Naive thymus-derived CD4-positive, alpha-beta T cell (primary cell): ENCODE measurements at regions of chr11 and their contacts with region 1.

Region 1: GRCh38 chr11:102666331-102666957 is 39.1 kb downstream of the MMP27 start:
- DNase-seq: peak in 7 of 9 donors; percentile 4 to 42 (median 23)
- ATAC-seq: peak; percentile 51
- H3K4me3 ChIP-seq: no peak overlapping the region
- H3K4me3 Mint-ChIP-seq: no peak overlapping the region
- H3K27ac ChIP-seq: no peak overlapping the region
- H3K27ac Mint-ChIP-seq: no peak overlapping the region
- H3K4me1 ChIP-seq: no peaks in the 10 kb centered on the region
- H3K4me1 Mint-ChIP-seq: no peaks in the 10 kb centered on the region
- H3K27me3 ChIP-seq: no peaks in the 10 kb centered on the region
- H3K27me3 Mint-ChIP-seq: peaks cover 0 to 15% (median 6%) of the 10 kb centered on the region in 5 donors

Region 2: GRCh38 chr11:101860696-101861427 is 805.6 kb before region 1 on chr11:
- CTCF ChIA-PET with region 1: interaction called, 6 read pairs
- POLR2A ChIA-PET with region 1: no interaction called
- intact Hi-C with region 1: loop called (anchors 1 to 2 kb)
- DNase-seq: peak in 6 of 9 donors; percentile 1 to 36 (median 24)
- ATAC-seq: peak; percentile 76
- H3K4me3 ChIP-seq: no peak overlapping the region
- H3K4me3 Mint-ChIP-seq: no peak overlapping the region
- H3K27ac ChIP-seq: no peak overlapping the region
- H3K27ac Mint-ChIP-seq: no peak overlapping the region
- H3K4me1 ChIP-seq: no peaks in the 10 kb centered on the region
- H3K4me1 Mint-ChIP-seq: peaks cover 0 to 4% (median 0%) of the 10 kb centered on the region in 7 donors
- H3K27me3 ChIP-seq: no peaks in the 10 kb centered on the region
- H3K27me3 Mint-ChIP-seq: peaks cover 5 to 22% (median 12%) of the 10 kb centered on the region in 5 donors

Region 3: DNA sequence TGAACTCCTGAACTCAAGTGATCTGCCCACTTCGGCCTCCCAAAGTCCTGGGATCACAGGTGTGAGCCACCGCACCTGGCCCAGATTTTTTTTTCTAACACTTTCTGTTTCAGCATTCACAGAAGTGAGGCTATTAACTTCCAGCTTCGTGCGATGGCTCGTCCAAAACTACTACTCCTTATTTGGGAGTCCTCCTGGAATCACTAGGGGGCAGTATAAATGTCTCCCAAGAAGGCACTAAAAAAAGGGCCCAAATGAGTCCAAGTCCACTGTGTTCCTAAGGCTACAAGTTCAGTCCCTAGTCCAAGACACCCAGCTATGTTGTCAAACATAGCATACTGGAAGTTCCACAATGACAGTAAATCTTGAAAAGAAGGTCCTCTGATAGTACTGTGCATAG is 412.4 kb before region 1 on chr11:
- CTCF ChIA-PET with region 1: interaction called, 3 read pairs
- POLR2A ChIA-PET with region 1: no interaction called
- intact Hi-C with region 1: loop called in 1 of 2 experiments (anchors 1 kb)
- DNase-seq: no peak
- ATAC-seq: no peak
- H3K4me3 ChIP-seq: no peak overlapping the region
- H3K4me3 Mint-ChIP-seq: no peak overlapping the region
- H3K27ac ChIP-seq: no peak overlapping the region
- H3K27ac Mint-ChIP-seq: no peak overlapping the region
- H3K4me1 ChIP-seq: no peaks in the 10 kb centered on the region
- H3K4me1 Mint-ChIP-seq: no peaks in the 10 kb centered on the region
- H3K27me3 ChIP-seq: no peaks in the 10 kb centered on the region
- H3K27me3 Mint-ChIP-seq: no peaks in the 10 kb centered on the region

Region 4: DNA sequence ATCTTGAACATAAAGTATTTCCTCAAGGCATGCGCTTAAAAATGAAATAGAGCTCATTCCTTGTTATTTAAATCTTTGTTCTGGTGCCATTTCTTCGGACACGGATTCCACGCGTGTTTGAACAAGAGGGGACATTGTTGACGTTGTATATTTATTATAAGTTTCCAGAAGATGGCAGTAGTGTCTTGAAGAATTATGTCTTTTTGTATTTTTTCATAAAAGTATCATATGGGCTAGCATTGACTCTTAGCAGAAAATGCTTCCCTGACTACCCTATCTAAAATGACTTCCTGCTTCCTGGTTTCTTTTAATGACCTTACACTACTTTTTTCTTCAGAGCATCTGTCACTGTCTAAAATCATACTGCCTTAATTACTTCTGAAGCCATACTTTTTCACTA is 299.1 kb before region 1 on chr11:
- CTCF ChIA-PET with region 1: interaction called, 6 read pairs
- POLR2A ChIA-PET with region 1: no interaction called
- intact Hi-C with region 1: loop called (anchors 1 kb)
- DNase-seq: peak in 6 of 9 donors; percentile 33 to 65 (median 56)
- ATAC-seq: peak; percentile 77
- H3K4me3 ChIP-seq: no peak overlapping the region
- H3K4me3 Mint-ChIP-seq: peak overlapping the region in 3 of 10 donors; percentile 4 to 28 (median 19)
- H3K27ac ChIP-seq: no peak overlapping the region
- H3K27ac Mint-ChIP-seq: peak overlapping the region; percentile 16 to 93 (median 83)
- H3K4me1 ChIP-seq: peaks cover 0 to 12% of the 10 kb centered on the region in 2 donors
- H3K4me1 Mint-ChIP-seq: peaks cover 9 to 48% (median 33%) of the 10 kb centered on the region in 7 donors
- H3K27me3 ChIP-seq: no peaks in the 10 kb centered on the region
- H3K27me3 Mint-ChIP-seq: no peaks in the 10 kb centered on the region

Region 5: GRCh38 chr11:102495161-102496042 is 171.0 kb before region 1 on chr11:
- CTCF ChIA-PET with region 1: interaction called, 7 read pairs
- POLR2A ChIA-PET with region 1: no interaction called
- intact Hi-C with region 1: loop called (anchors 1 kb)
- DNase-seq: peak in 7 of 9 donors; percentile 54 to 79 (median 71)
- ATAC-seq: peak; percentile 91
- H3K4me3 ChIP-seq: no peak overlapping the region
- H3K4me3 Mint-ChIP-seq: peak overlapping the region in 1 of 10 donors; percentile 18
- H3K27ac ChIP-seq: no peak overlapping the region
- H3K27ac Mint-ChIP-seq: peak overlapping the region in 4 of 9 donors; percentile 2 to 40 (median 12)
- H3K4me1 ChIP-seq: no peaks in the 10 kb centered on the region
- H3K4me1 Mint-ChIP-seq: peaks cover 4 to 26% (median 10%) of the 10 kb centered on the region in 7 donors
- H3K27me3 ChIP-seq: no peaks in the 10 kb centered on the region
- H3K27me3 Mint-ChIP-seq: peaks cover 0 to 22% (median 0%) of the 10 kb centered on the region in 5 donors

Region 6: DNA sequence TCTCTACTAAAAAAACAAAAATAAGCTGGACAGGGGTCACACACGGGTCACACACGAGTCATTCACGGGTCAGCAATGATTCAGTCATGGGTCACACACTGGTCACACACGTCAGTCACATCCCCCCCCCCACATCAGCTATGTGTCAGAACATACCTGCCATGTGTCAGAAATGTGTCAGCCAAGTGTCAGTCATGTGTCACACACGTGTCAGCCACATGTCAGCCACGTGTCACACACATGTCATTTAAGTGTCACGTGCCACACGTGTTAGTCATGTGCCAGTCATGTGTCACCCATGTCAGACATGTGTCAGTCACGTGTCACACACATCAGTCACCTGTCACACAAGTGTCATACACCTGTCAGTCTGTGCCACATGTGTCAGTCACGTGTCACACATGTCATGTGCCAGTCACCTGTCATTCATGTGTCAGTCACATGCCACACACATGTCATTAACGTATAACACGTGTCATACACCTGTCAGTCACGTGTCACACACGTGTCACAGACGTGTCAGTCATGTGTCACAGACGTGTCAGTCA is 12.6 kb before region 1 on chr11:
- CTCF ChIA-PET with region 1: interaction called, 11 read pairs
- POLR2A ChIA-PET with region 1: no interaction called
- intact Hi-C with region 1: no loop called
- DNase-seq: no peak
- ATAC-seq: no peak
- H3K4me3 ChIP-seq: no peak overlapping the region
- H3K4me3 Mint-ChIP-seq: no peak overlapping the region
- H3K27ac ChIP-seq: no peak overlapping the region
- H3K27ac Mint-ChIP-seq: no peak overlapping the region
- H3K4me1 ChIP-seq: no peaks in the 10 kb centered on the region
- H3K4me1 Mint-ChIP-seq: no peaks in the 10 kb centered on the region
- H3K27me3 ChIP-seq: no peaks in the 10 kb centered on the region
- H3K27me3 Mint-ChIP-seq: peaks cover 13 to 44% (median 34%) of the 10 kb centered on the region in 5 donors

Region 7: GRCh38 chr11:102733232-102733875 is 66.9 kb after region 1 on chr11:
- CTCF ChIA-PET with region 1: no interaction called
- POLR2A ChIA-PET with region 1: no interaction called
- intact Hi-C with region 1: no loop called
- DNase-seq: peak in 1 of 9 donors; percentile 45
- ATAC-seq: peak; percentile 66
- H3K4me3 ChIP-seq: no peak overlapping the region
- H3K4me3 Mint-ChIP-seq: no peak overlapping the region
- H3K27ac ChIP-seq: no peak overlapping the region
- H3K27ac Mint-ChIP-seq: no peak overlapping the region
- H3K4me1 ChIP-seq: no peaks in the 10 kb centered on the region
- H3K4me1 Mint-ChIP-seq: no peaks in the 10 kb centered on the region
- H3K27me3 ChIP-seq: peaks cover 0 to 3% of the 10 kb centered on the region in 2 donors
- H3K27me3 Mint-ChIP-seq: peaks cover 18 to 38% (median 28%) of the 10 kb centered on the region in 5 donors